CD4-positive, alpha-beta T cell (primary cell): ENCODE measurements at regions of chr3 and their contacts with region 1.

Region 1: GRCh38 chr3:112667599-112667998 is 26.7 kb upstream of the CCDC80 start:
- DNase-seq: no peak
- ATAC-seq: no peak
- H3K4me3 ChIP-seq: no peak overlapping the region
- H3K4me3 Mint-ChIP-seq: no peak overlapping the region
- H3K27ac ChIP-seq: no peak overlapping the region
- H3K27ac Mint-ChIP-seq: no peak overlapping the region
- H3K4me1 ChIP-seq: peaks cover 18% of the 10 kb centered on the region
- H3K4me1 Mint-ChIP-seq: peaks cover 14% of the 10 kb centered on the region
- H3K27me3 ChIP-seq: no peaks in the 10 kb centered on the region
- H3K27me3 Mint-ChIP-seq: no peaks in the 10 kb centered on the region
- CTCF ChIP-seq: no peak

Region 2: GRCh38 chr3:111846717-111847116 is 820.9 kb before region 1 on chr3:
- CTCF ChIA-PET with region 1: no interaction called
- POLR2A ChIA-PET with region 1: no interaction called
- intact Hi-C with region 1: no loop called
- DNase-seq: no peak
- ATAC-seq: no peak
- H3K4me3 ChIP-seq: no peak overlapping the region
- H3K4me3 Mint-ChIP-seq: no peak overlapping the region
- H3K27ac ChIP-seq: no peak overlapping the region
- H3K27ac Mint-ChIP-seq: no peak overlapping the region
- H3K4me1 ChIP-seq: peaks cover 5% of the 10 kb centered on the region
- H3K4me1 Mint-ChIP-seq: peaks cover 5% of the 10 kb centered on the region
- H3K27me3 ChIP-seq: no peaks in the 10 kb centered on the region
- H3K27me3 Mint-ChIP-seq: peaks cover 15% of the 10 kb centered on the region
- CTCF ChIP-seq: no peak

Region 3: DNA sequence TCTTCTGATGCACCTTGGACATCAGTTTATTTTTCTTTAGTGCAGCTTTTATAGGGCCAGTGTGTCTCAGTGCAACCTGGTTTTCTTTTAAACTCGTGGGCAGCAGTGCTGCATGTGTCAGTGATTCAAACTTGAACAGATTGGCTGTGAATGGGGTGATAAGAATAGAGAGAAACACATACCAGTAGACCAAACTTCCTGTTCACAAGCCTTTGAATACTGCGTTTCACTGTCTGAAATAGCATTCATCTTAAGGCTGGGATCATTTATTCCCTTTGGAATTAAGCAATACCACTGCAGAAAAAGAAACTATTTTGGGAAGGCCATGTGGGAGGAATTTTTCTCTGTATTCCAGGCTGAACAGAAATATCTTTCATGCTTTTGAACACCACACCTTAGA is 756.8 kb before region 1 on chr3:
- CTCF ChIA-PET with region 1: no interaction called
- POLR2A ChIA-PET with region 1: no interaction called
- intact Hi-C with region 1: no loop called
- DNase-seq: no peak
- ATAC-seq: no peak
- H3K4me3 ChIP-seq: no peak overlapping the region
- H3K4me3 Mint-ChIP-seq: no peak overlapping the region
- H3K27ac ChIP-seq: no peak overlapping the region
- H3K27ac Mint-ChIP-seq: no peak overlapping the region
- H3K4me1 ChIP-seq: no peaks in the 10 kb centered on the region
- H3K4me1 Mint-ChIP-seq: peaks cover 4% of the 10 kb centered on the region
- H3K27me3 ChIP-seq: no peaks in the 10 kb centered on the region
- H3K27me3 Mint-ChIP-seq: no peaks in the 10 kb centered on the region
- CTCF ChIP-seq: no peak

Region 4: GRCh38 chr3:112689989-112690388 is 22.4 kb after region 1 on chr3:
- CTCF ChIA-PET with region 1: no interaction called
- POLR2A ChIA-PET with region 1: no interaction called
- intact Hi-C with region 1: loop called in 1 of 2 experiments (anchors 2 kb)
- DNase-seq: no peak
- ATAC-seq: no peak
- H3K4me3 ChIP-seq: no peak overlapping the region
- H3K4me3 Mint-ChIP-seq: no peak overlapping the region
- H3K27ac ChIP-seq: no peak overlapping the region
- H3K27ac Mint-ChIP-seq: no peak overlapping the region
- H3K4me1 ChIP-seq: peaks cover 5% of the 10 kb centered on the region
- H3K4me1 Mint-ChIP-seq: peaks cover 6% of the 10 kb centered on the region
- H3K27me3 ChIP-seq: no peaks in the 10 kb centered on the region
- H3K27me3 Mint-ChIP-seq: no peaks in the 10 kb centered on the region
- CTCF ChIP-seq: no peak